KBM-7 (cell line): ENCODE measurements at regions of chr15 and their contacts with region 1.

Region 1: DNA sequence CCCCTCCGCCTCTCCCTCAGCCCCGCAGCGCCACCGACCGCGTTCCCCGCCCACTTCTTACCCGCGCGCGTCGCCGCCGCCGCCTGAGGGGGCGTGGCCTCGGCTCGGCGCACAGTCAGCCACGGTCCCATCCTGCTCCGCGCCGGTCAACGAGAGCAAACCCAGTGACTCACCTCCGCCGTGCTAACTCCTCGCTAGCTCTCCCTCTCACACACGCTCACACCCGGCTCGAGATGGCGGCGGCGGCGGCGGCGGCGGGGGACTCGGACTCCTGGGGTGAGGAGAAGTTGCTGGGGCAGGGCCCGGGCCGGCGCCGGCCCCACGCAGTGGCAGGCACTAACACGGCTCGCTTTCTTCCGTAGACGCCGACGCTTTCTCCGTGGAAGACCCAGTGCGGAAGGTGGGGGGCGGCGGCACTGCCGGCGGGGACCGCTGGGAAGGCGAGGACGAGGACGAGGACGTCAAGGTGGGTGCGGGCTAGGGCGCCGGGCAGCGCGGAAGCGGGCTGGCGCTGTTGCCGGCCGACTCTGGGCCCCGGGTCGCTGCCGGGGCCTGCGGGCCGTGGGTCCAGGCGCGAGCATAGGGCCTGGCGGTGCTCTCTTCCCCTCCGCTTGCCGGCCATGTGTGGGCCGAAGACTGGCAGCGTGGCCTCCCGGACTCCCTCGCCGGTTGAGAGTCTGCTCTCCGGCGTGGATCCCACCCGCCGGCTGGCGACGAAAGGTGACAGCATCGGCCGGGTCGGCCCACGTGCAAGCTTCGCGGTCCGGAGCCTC is at the start of gene EIF3J:
- DNase-seq: peak; percentile 96

Region 2: GRCh38 chr15:43881944-43882343 is 655.2 kb before region 1 on chr15:
- in situ Hi-C with region 1: loop called (anchors 25 kb)
- DNase-seq: peak; percentile 7

Region 3: GRCh38 chr15:44882499-44882968 is 345.4 kb after region 1 on chr15:
- in situ Hi-C with region 1: no loop called
- DNase-seq: no peak